HepG2 (cell line): ENCODE measurements at regions of chr15 and their contacts with region 1.

Region 1: DNA sequence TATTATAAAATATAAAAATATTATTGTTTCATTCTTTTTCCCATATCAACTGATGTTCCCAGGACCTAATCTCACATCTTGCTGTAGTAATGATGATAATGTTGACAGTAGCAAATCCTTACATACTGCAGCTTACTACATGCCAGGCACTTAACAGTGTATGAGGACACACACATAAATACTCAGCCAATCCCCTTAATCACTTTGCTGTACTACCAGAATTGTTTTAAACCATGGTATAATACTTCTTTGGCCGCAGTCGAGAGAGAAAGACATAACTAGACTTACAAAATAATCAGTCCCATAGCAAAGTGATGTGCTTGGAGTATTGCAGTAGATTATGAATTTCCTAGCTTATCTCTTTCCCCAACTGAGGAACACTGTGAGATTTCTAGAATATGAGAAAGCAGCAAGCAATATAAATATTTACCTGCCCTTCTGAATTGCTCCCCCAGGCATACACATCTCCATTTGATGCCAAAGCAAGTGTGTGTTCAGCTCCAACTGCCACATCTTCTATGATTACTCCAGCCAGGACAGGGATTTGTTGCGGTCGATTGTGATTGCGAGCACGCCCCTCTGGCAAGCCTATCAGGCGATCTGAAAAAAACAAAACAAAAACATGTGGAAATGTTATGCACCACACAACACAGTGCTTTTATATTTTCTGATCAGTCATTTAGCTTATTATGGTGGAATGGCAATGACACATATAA is 33.0 kb downstream of the FBXL22 start:
- DNase-seq: no peak
- ATAC-seq: no peak
- H3K4me3 ChIP-seq: no peak overlapping the region
- H3K27ac ChIP-seq: no peak overlapping the region
- H3K4me1 ChIP-seq: no peaks in the 10 kb centered on the region
- H3K27me3 ChIP-seq: no peaks in the 10 kb centered on the region
- CTCF ChIP-seq: no peak
- EP300 ChIP-seq: no peak
- POLR2A ChIP-seq: no peak
- RAD21 ChIP-seq: no peak

Region 2: GRCh38 chr15:63708126-63708772 is 78.1 kb after region 1 on chr15:
- CTCF ChIA-PET with region 1: no interaction called
- POLR2A ChIA-PET with region 1: no interaction called
- in situ Hi-C with region 1: no loop called
- intact Hi-C with region 1: loop called (anchors 10 kb)
- DNase-seq: no peak
- ATAC-seq: no peak
- H3K4me3 ChIP-seq: no peak overlapping the region
- H3K27ac ChIP-seq: no peak overlapping the region
- H3K4me1 ChIP-seq: peaks cover 31% of the 10 kb centered on the region
- H3K27me3 ChIP-seq: no peaks in the 10 kb centered on the region
- CTCF ChIP-seq: no peak
- EP300 ChIP-seq: no peak
- POLR2A ChIP-seq: no peak
- RAD21 ChIP-seq: no peak